ENCODE measurements at regions of chr3 and their contacts with region 1.

Region 1: GRCh38 chr3:98540346-98540745 is 8.6 kb downstream of the GPR15 start:
- DNase-seq: no peak
- H3K4me3 Mint-ChIP-seq: no peak overlapping the region
- H3K27ac Mint-ChIP-seq: peak overlapping the region; percentile 17
- H3K4me1 Mint-ChIP-seq: peaks cover 63% of the 10 kb centered on the region
- H3K27me3 Mint-ChIP-seq: no peaks in the 10 kb centered on the region

Region 2: DNA sequence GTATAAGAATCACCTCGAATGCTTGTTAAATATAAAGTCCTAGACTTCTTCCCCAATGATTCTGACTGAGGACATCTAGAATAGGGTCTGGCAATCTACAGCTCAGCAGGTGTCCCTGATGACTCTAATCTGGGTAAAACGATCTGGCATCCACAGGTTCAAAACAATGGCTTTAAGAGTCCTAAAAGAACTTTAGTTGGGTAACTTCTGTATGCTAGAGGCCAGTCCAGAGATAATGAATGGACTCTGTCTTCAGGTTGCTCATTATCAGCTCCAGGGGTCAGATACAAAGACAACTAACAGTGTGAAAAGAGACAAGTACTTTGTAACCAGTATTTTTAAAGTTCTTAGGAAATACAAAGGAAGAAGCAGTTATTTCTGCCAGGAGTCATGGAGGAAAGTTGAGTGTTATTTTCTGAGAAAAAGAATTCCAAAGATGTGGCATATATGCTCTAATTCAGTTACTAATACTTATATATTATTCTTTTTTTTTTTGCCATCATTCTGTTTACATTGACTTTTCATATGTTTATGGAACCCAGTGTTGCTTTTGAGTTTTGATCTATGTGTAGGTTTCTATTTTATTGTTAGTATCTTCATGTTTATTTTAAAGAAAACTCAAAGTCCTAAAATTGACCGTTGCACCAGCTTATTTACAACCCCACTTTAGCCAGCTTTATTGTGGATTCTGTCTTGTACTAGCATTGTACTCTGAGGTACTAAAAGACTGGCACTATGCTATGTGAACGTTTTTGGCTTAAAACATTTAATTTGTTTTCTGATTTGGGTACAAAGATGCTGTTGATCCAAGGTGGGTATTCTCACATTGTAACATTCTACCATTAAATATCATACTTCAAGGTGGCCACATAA is 11.6 kb before region 1 on chr3:
- intact Hi-C with region 1: loop called (anchors 1 kb)
- DNase-seq: no peak
- H3K4me3 Mint-ChIP-seq: peak overlapping the region; percentile 49
- H3K27ac Mint-ChIP-seq: peak overlapping the region; percentile 78
- H3K4me1 Mint-ChIP-seq: peaks cover 76% of the 10 kb centered on the region
- H3K27me3 Mint-ChIP-seq: no peaks in the 10 kb centered on the region

Region 3: DNA sequence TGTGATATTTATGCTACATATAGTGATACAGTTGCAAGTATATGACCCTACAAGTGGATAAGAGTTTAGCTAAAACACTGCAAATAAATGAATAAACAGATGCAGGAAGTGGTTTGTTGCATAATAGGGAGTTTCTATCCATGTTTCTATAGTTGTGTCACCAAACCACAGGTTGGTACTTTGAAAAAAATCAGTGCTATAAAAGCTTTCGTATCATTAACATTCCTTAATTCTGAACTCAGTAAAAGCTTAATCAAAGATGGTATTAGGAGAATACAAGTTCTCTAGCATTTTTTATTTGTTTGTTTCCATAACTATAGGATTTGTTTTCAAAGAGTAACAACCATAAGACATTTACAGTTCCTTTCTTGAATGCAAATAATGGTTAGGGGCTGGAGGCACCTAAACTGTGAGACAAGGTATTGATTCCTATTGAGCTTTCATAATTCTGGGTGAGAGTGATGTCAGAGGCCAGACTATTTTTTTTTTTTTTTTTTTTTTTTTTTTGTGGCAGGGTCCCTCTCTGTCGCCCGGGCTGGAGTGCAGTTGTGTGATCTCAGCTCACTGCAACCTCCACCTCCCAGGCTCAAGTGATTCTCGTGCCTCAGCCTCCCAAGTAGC is 23.4 kb after region 1 on chr3:
- intact Hi-C with region 1: loop called (anchors 1 kb)
- DNase-seq: no peak
- H3K4me3 Mint-ChIP-seq: no peak overlapping the region
- H3K27ac Mint-ChIP-seq: no peak overlapping the region
- H3K4me1 Mint-ChIP-seq: peaks cover 67% of the 10 kb centered on the region
- H3K27me3 Mint-ChIP-seq: no peaks in the 10 kb centered on the region

Measured in activated T-helper 2 cell treated with anti-CD3 and anti-CD28 coated beads, Interferon-gamma antibody, Interleukin-2, Interleukin-4, amounts not matched to agents 10 μg/mL and 5 μg/mL and 100 μg/mL, durations not matched to agents 14 hours and 24 hours and 36 hours (primary cell).